ENCODE measurements at regions of chr7 and their contacts with region 1.

Region 1: DNA sequence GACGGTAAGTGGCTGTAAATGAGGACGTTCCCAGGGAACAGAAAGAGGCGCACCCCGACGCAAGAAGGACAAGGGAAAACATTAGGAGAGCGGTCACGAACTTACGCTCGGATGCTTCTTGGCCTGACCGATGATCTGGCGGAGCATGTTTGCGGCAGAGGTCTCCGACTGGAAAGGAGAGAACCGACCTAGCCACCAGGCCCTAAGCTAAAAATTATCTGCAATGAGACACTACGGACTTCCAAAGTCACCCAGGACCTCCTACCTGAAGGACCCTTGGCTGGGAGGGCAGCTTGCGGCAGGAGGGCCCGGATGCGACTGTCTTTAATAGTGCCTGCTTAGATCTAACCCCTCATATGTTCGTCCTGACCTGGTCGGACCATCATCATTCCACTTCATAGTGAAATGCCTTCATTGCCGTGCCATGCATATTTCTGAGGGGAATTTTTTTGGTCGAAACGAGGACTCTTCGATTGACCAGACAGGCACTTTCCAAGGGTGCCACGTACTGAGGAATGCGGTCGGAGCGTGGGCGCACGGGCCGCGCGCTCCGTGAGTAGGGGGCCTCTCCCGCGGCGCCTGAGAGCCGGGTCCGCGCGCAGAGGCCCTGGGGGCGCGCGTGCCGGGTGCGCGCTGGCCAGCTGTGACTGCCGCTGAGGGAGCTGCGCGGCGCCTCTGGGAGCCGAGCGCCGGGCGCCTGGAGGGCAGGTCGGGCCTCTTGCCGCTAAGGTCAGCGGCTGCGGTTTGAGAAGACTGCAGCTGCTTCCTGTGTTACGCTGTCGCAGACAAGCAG is 33.6 kb upstream of the PHF14 start:
- DNase-seq: peak; percentile 93

Region 2: GRCh38 chr7:10571759-10572158 is 368.3 kb before region 1 on chr7:
- CTCF ChIA-PET with region 1: no interaction called
- POLR2A ChIA-PET with region 1: no interaction called
- DNase-seq: no peak

Region 3: GRCh38 chr7:10845229-10845628 is 94.9 kb before region 1 on chr7:
- CTCF ChIA-PET with region 1: no interaction called
- POLR2A ChIA-PET with region 1: no interaction called
- DNase-seq: no peak

Region 4: DNA sequence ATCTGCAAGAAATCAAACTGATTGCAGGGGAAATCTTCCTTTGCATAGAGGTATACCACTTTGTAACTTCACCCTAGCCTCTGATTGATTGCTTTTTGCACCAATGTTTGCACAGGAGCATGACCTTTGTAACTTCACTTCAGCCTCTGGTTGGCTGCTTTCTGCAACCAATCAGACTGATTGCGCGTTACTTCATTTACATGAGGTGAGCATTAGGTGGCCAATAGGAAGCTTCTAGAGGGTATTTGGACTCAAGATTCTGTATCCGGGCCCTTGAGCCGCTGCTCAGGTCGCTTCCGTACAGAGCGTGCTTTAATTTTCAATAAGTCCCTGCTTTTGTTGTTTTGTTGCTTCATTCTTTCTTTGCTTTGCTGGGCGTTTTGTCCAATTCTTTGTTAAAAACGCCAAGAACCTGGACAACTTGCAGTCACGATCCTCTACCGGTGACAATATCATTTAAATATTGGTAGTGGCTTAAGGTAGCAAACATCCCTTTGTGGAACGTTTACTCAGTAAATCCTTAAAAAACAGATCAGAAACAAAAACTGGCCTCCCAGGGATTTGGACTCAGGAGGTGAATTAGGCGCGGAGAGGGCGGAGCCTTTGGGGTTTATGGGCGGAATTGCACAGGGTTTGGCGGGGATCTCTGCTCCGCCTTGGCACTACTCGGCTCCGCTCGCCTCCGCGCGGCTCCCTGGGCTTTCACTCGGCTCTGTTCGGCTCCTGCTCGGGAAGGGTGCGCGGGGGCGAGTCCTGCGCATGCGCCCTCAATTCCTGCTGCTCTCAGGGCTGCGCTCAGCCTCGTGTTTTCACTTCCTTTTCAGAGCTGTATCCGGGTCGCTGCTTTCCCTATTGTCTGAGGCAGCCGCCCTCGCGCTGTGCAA is 33.2 kb after region 1 on chr7 and contains the start of gene PHF14:
- CTCF ChIA-PET with region 1: no interaction called
- POLR2A ChIA-PET with region 1: interaction called, 30 read pairs
- DNase-seq: peak; percentile 95

Measured in HEK293T (cell line).